Naive thymus-derived CD4-positive, alpha-beta T cell (primary cell): ENCODE measurements at regions of chr1 and their contacts with region 1.

Region 1: DNA sequence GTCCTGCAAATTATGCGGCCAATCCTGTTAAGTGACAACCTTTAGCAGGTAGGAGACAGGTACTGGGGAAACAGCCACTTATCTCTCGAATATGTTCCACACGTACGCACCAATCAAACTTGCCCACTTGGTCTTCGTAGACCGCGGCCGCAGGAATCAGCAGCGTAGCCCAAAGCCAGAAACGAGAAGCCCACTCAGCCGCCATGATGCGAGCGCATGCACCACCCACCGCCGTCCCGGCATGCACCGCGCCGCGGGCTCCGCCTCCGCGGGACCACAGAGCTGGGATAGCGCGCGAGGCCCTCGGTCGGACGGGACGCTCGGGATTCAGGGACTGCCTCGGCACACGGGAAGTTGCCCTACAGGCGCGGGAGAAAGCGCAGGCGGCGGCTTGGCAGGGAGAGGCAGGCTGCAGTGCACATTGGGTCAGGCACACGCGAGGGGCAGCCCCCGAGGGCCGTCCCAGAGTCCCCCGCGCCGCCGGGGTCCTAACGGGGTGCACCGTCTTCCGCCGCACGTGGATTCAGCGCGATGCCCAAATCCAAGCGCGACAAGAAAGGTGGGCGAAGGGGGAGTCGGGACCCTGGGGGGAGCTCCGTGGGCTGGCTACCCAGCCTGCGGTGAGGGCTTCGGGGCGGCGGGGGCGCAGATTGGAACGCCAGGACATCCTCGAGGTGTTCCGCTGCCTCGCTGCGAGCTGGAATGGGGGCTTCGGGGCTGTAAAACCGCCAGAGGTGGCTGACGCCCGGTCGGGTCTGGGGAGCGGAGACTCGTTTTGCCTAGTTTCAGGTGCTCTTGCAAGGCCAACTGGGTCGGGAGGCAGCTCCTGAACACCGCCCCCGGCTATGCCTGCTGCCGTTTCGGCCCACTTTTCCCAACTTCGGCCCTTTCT is at the starts of genes EMC1 and MRTO4:
- DNase-seq: peak; percentile 83 to 96 (median 92)
- ATAC-seq: peak; percentile 97
- H3K4me3 ChIP-seq: peak within 1 kb of the TSS; percentile 92
- H3K4me3 Mint-ChIP-seq: peak within 1 kb of the TSS; percentile 91 to 98 (median 96)
- H3K27ac ChIP-seq: peak within 1 kb of the TSS; percentile 91
- H3K27ac Mint-ChIP-seq: peak within 1 kb of the TSS; percentile 91 to 97 (median 95)
- H3K4me1 ChIP-seq: peaks cover 26 to 30% of the 10 kb centered on the region in 2 donors
- H3K4me1 Mint-ChIP-seq: peaks cover 20 to 46% (median 29%) of the 10 kb centered on the region in 7 donors
- H3K27me3 ChIP-seq: no peaks in the 10 kb centered on the region
- H3K27me3 Mint-ChIP-seq: no peaks in the 10 kb centered on the region
- total RNA-seq, gene EMC1: 29.8 to 43.7 (median 37.1) TPM
- total RNA-seq, gene MRTO4: 17.1 to 42.3 (median 22.4) TPM

Region 2: DNA sequence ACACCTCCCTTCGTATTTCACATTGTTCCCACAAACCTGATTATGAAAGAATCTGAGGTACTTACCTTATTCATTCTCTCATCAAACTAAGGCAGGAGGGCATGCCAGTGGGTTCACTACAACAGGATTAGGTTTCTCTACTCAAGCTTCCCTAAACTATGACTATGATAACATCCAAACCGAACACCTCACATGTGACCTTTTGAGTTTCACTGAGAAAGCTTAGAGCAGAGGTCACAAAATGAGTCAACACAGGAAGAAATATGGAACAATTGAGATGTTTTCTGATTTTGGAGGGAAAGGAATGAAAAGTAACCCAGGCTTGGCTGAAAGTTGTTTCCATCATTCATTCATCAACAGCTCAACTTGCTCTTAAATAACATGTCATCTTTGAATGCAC is 65.5 kb before region 1 on chr1:
- CTCF ChIA-PET with region 1: no interaction called
- POLR2A ChIA-PET with region 1: no interaction called
- intact Hi-C with region 1: no loop called
- DNase-seq: no peak
- ATAC-seq: no peak
- H3K4me3 ChIP-seq: no peak overlapping the region
- H3K4me3 Mint-ChIP-seq: no peak overlapping the region
- H3K27ac ChIP-seq: no peak overlapping the region
- H3K27ac Mint-ChIP-seq: peak overlapping the region in 2 of 9 donors; percentile 4 to 15
- H3K4me1 ChIP-seq: no peaks in the 10 kb centered on the region
- H3K4me1 Mint-ChIP-seq: peaks cover 5 to 21% (median 10%) of the 10 kb centered on the region in 7 donors
- H3K27me3 ChIP-seq: no peaks in the 10 kb centered on the region
- H3K27me3 Mint-ChIP-seq: no peaks in the 10 kb centered on the region

Region 3: GRCh38 chr1:19209990-19210771 is 41.4 kb before region 1 on chr1 and contains the start of gene UBR4:
- CTCF ChIA-PET with region 1: interaction called, 3 read pairs
- POLR2A ChIA-PET with region 1: interaction called, 7 read pairs
- intact Hi-C with region 1: loop called (anchors 1 kb)
- DNase-seq: peak; percentile 95 to 97 (median 96)
- ATAC-seq: peak; percentile 95
- H3K4me3 ChIP-seq: peak within 1 kb of the TSS; percentile 60
- H3K4me3 Mint-ChIP-seq: peak within 1 kb of the TSS; percentile 83 to 98 (median 94)
- H3K27ac ChIP-seq: peak within 1 kb of the TSS; percentile 85
- H3K27ac Mint-ChIP-seq: peak within 1 kb of the TSS; percentile 94 to 99 (median 97)
- H3K4me1 ChIP-seq: peaks cover 24 to 38% of the 10 kb centered on the region in 2 donors
- H3K4me1 Mint-ChIP-seq: peaks cover 49 to 87% (median 82%) of the 10 kb centered on the region in 7 donors
- H3K27me3 ChIP-seq: no peaks in the 10 kb centered on the region
- H3K27me3 Mint-ChIP-seq: peaks cover 0 to 2% (median 0%) of the 10 kb centered on the region in 5 donors
- total RNA-seq, gene UBR4: 120 to 174 (median 159) TPM

Region 4: DNA sequence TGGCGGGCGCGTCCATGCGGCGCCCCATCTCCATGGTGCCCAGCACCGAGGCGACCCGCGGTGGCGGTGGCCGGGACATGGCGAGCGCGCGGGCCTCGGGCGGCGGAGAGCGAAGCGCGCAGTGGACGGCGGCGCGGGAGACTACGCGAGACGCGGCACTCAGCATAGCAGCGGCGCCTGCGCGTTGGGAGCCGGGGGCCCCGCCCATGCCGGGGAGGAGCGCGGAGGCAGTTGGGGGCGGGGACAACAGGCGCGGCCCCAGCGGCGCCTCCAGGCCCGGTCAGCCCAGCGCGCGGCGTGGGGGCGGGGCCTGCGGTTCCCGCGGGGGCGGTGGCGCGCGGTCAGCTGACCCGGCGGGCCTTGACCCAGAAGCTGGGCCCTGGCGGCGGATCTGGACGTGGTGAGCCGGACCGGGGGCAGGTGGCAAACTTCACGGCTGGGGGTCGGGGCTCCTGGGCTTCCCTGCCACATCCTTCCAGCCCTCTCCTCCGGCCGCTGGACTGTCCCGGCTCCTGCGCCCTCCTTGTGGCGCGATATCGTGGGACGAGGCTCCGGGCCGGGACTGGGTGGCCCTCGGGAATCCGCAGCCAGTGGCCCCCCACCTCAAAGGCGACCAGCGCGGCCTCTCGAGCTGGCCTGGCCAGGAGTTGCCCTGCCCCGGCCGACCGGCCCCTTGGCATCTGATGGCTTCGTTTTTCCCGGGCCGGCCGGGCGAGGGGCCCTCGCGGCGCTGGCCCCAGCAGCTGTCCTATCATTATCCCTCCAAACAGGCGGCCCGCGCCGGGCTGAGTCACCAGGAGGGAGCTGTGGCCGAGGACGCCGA is 60.6 kb after region 1 on chr1 and contains the starts of genes AKR7A2 and SLC66A1:
- CTCF ChIA-PET with region 1: no interaction called
- POLR2A ChIA-PET with region 1: interaction called, 4 read pairs
- intact Hi-C with region 1: loop called in 1 of 2 experiments (anchors 1 kb)
- DNase-seq: peak; percentile 68 to 97 (median 91)
- ATAC-seq: peak; percentile 98
- H3K4me3 ChIP-seq: peak within 1 kb of the TSS; percentile 76
- H3K4me3 Mint-ChIP-seq: peak within 1 kb of the TSS; percentile 86 to 94 (median 91)
- H3K27ac ChIP-seq: peak within 1 kb of the TSS; percentile 85
- H3K27ac Mint-ChIP-seq: peak within 1 kb of the TSS; percentile 33 to 83 (median 80)
- H3K4me1 ChIP-seq: peaks cover 16 to 17% of the 10 kb centered on the region in 2 donors
- H3K4me1 Mint-ChIP-seq: peaks cover 29 to 49% (median 44%) of the 10 kb centered on the region in 7 donors
- H3K27me3 ChIP-seq: no peaks in the 10 kb centered on the region
- H3K27me3 Mint-ChIP-seq: no peaks in the 10 kb centered on the region
- total RNA-seq, gene AKR7A2: 15.7 to 33.9 (median 25.2) TPM
- total RNA-seq, gene SLC66A1: 3.8 to 8.4 (median 7.2) TPM

Region 5: GRCh38 chr1:19643602-19644394 is 392.2 kb after region 1 on chr1 and contains the start of gene NBL1:
- CTCF ChIA-PET with region 1: no interaction called
- POLR2A ChIA-PET with region 1: no interaction called
- intact Hi-C with region 1: loop called in 1 of 2 experiments (anchors 1 kb)
- DNase-seq: peak; percentile 60 to 86 (median 71)
- ATAC-seq: peak; percentile 93
- H3K4me3 ChIP-seq: peak within 1 kb of the TSS; percentile 62
- H3K4me3 Mint-ChIP-seq: peak within 1 kb of the TSS; percentile 87 to 100 (median 97)
- H3K27ac ChIP-seq: peak within 1 kb of the TSS; percentile 69
- H3K27ac Mint-ChIP-seq: peak within 1 kb of the TSS; percentile 80 to 98 (median 92)
- H3K4me1 ChIP-seq: peaks cover 6 to 7% of the 10 kb centered on the region in 2 donors
- H3K4me1 Mint-ChIP-seq: peaks cover 17 to 38% (median 33%) of the 10 kb centered on the region in 7 donors
- H3K27me3 ChIP-seq: no peaks in the 10 kb centered on the region
- H3K27me3 Mint-ChIP-seq: peaks cover 0 to 29% (median 8%) of the 10 kb centered on the region in 5 donors
- total RNA-seq, gene NBL1: 20.7 to 36.1 (median 22.8) TPM